ENCODE measurements at regions of chr11 and their contacts with region 1.

Region 1: DNA sequence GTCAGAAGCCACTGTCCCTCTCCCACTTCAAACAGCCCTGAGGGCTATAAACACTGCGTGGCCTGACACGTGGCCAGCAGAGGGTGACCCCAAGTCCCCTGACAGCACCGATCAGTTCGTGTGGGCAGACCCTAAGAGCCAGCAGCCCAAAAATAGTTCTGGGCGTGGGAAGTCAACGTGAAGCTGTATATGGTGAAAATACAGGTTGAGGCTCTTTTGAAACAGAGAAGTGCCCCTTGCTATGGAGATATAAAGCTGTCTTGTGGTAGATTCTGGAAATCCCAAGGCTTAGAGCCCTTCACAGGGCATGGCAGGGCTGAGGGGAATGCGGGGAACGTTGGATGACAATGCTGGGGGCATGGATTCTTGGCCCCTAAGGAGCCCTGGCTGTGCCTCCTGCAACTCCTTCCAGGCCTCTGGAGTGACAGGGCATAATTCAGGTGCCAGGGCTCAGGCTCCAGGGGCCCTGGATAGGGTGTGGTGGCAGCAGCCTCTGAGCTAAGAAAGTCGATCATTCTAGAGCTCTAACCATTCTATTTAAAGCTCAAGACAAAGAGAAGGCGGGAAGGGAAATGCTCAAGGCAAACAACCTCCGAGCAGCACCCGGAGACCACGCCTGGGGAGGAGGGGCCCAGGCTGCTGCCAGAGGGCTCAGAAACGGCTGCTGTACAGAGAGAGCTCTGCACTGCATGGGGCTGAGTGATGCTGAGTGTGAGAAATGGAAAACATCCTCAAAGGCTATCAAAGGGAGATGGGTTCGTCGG is 60.4 kb upstream of the CD5 start:
- DNase-seq: peak; percentile 54 to 92 (median 83)
- H3K4me3 ChIP-seq: peak overlapping the region; percentile 20
- H3K4me3 Mint-ChIP-seq: peak overlapping the region; percentile 74 to 90 (median 83)
- H3K27ac ChIP-seq: peak overlapping the region; percentile 83
- H3K27ac Mint-ChIP-seq: peak overlapping the region; percentile 95 to 100 (median 97)
- H3K4me1 ChIP-seq: peaks cover 50% of the 10 kb centered on the region
- H3K4me1 Mint-ChIP-seq: peaks cover 25 to 49% (median 37%) of the 10 kb centered on the region in 3 donors
- H3K27me3 ChIP-seq: no peaks in the 10 kb centered on the region
- H3K27me3 Mint-ChIP-seq: no peaks in the 10 kb centered on the region

Region 2: DNA sequence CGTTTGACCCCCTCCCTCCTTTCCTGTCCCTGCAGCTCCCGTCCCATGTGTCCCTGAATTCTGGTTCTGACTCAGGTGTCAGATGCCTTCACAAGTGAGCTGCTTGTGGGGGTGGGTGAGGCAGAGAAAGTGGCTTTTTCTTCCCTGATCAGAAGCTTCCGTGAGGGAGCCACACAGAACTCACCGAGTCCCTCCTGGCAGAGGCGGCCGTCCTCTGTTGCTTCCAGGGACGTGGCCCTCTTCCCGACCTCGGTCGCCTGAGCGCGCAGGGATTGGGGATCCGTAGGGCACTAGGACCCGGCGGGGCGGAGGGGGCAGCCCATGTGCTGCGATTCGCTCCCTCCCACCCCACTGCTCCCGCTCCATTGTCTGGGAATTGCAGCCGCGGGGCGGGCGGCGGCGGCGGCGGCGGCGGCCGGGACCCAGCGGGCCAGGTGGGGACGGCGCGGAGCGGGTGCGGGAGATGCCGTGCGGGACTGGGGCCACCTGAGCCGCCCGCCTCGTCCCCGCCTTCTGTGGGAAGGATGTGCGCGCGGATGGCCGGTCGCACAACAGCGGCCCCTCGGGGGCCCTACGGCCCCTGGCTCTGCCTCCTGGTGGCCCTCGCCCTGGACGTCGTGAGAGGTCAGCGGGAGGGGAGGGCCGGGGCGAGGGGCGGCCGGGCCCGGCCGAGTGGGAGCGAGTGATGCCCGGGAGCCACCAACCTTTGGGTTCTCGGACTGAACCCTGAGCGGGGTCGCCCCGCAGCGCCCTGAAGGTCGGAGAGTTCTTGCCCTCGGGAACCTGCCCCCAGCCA is 117.6 kb before region 1 on chr11 and contains the start of gene TMEM132A:
- CTCF ChIA-PET with region 1: no interaction called
- POLR2A ChIA-PET with region 1: no interaction called
- DNase-seq: no peak
- H3K4me3 ChIP-seq: no peak within 1 kb of the TSS
- H3K4me3 Mint-ChIP-seq: peak within 1 kb of the TSS; percentile 8 to 89 (median 70)
- H3K27ac ChIP-seq: no peak within 1 kb of the TSS
- H3K27ac Mint-ChIP-seq: peak within 1 kb of the TSS in 5 of 8 donors; percentile 18 to 56 (median 43)
- H3K4me1 ChIP-seq: peaks cover 13% of the 10 kb centered on the region
- H3K4me1 Mint-ChIP-seq: peaks cover 14 to 24% (median 17%) of the 10 kb centered on the region in 3 donors
- H3K27me3 ChIP-seq: peaks cover 20% of the 10 kb centered on the region
- H3K27me3 Mint-ChIP-seq: peaks cover 10 to 20% of the 10 kb centered on the region in 2 donors
- total RNA-seq, gene TMEM132A: 0.68 to 0.73 TPM

Region 3: GRCh38 chr11:60978546-60979380 is 63.2 kb before region 1 on chr11:
- CTCF ChIA-PET with region 1: interaction called, 3 read pairs
- POLR2A ChIA-PET with region 1: interaction called, 11 read pairs
- DNase-seq: peak in 4 of 5 donors; percentile 41 to 72 (median 54)
- H3K4me3 ChIP-seq: peak overlapping the region; percentile 17
- H3K4me3 Mint-ChIP-seq: peak overlapping the region; percentile 70 to 84 (median 81)
- H3K27ac ChIP-seq: peak overlapping the region; percentile 29
- H3K27ac Mint-ChIP-seq: peak overlapping the region; percentile 87 to 99 (median 96)
- H3K4me1 ChIP-seq: peaks cover 87% of the 10 kb centered on the region
- H3K4me1 Mint-ChIP-seq: peaks cover 82 to 95% (median 94%) of the 10 kb centered on the region in 3 donors
- H3K27me3 ChIP-seq: no peaks in the 10 kb centered on the region
- H3K27me3 Mint-ChIP-seq: no peaks in the 10 kb centered on the region

Region 4: GRCh38 chr11:61021661-61022212 is 20.2 kb before region 1 on chr11:
- CTCF ChIA-PET with region 1: interaction called, 27 read pairs
- POLR2A ChIA-PET with region 1: interaction called, 38 read pairs
- DNase-seq: peak; percentile 82 to 94 (median 89)
- H3K4me3 ChIP-seq: peak overlapping the region; percentile 60
- H3K4me3 Mint-ChIP-seq: peak overlapping the region; percentile 9 to 83 (median 77)
- H3K27ac ChIP-seq: peak overlapping the region; percentile 40
- H3K27ac Mint-ChIP-seq: peak overlapping the region; percentile 94 to 99 (median 98)
- H3K4me1 ChIP-seq: peaks cover 64% of the 10 kb centered on the region
- H3K4me1 Mint-ChIP-seq: peaks cover 61 to 87% (median 67%) of the 10 kb centered on the region in 3 donors
- H3K27me3 ChIP-seq: no peaks in the 10 kb centered on the region
- H3K27me3 Mint-ChIP-seq: peaks cover 0 to 1% of the 10 kb centered on the region in 2 donors

Region 5: DNA sequence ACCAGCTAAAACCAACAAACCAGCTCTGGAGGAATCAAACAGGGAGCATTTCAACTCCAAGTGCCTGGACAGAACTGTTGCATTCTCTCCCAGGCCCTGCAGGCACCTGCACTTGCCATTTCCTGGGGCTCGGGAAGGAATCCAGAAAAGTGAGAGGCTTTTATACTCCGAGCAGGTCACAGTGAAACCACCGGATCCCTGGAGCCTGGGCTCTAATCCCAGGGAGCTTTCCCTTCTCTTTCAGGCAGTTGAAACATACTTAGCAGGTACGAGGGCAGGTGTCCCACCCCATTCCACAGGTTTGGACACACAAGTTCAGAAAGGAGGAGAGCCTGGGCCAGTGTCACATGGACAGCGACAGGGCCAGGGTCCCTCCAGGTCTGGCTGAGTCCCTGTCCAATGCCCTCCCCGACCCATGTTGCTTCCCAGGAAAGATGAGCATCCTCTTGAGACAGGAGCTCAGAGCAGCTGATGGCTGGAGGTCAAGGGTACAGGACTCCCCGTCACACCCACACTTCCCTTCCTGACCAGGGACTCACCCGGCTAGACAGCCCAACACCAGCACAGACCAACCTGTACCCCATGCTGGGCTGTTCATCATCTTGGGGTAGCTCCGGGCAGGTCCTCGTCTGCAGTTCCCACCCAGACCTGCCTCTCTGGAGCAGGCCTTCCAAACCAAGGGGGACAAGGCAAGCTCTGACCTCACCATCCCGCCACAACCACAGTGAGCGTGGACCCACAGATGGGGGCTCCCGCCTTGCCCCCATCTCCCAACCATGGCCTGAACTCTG is 10.4 kb after region 1 on chr11:
- CTCF ChIA-PET with region 1: interaction called, 10 read pairs
- POLR2A ChIA-PET with region 1: interaction called, 6 read pairs
- DNase-seq: no peak
- H3K4me3 ChIP-seq: no peak overlapping the region
- H3K4me3 Mint-ChIP-seq: no peak overlapping the region
- H3K27ac ChIP-seq: no peak overlapping the region
- H3K27ac Mint-ChIP-seq: no peak overlapping the region
- H3K4me1 ChIP-seq: peaks cover 8% of the 10 kb centered on the region
- H3K4me1 Mint-ChIP-seq: peaks cover 1 to 43% (median 25%) of the 10 kb centered on the region in 3 donors
- H3K27me3 ChIP-seq: no peaks in the 10 kb centered on the region
- H3K27me3 Mint-ChIP-seq: no peaks in the 10 kb centered on the region

Region 6: GRCh38 chr11:61071208-61071681 is 29.3 kb after region 1 on chr11:
- CTCF ChIA-PET with region 1: interaction called, 15 read pairs
- POLR2A ChIA-PET with region 1: interaction called, 10 read pairs
- DNase-seq: peak; percentile 39 to 83 (median 70)
- H3K4me3 ChIP-seq: peak overlapping the region; percentile 36
- H3K4me3 Mint-ChIP-seq: peak overlapping the region; percentile 12 to 89 (median 77)
- H3K27ac ChIP-seq: peak overlapping the region; percentile 58
- H3K27ac Mint-ChIP-seq: peak overlapping the region; percentile 91 to 100 (median 95)
- H3K4me1 ChIP-seq: peaks cover 73% of the 10 kb centered on the region
- H3K4me1 Mint-ChIP-seq: peaks cover 44 to 85% (median 72%) of the 10 kb centered on the region in 3 donors
- H3K27me3 ChIP-seq: no peaks in the 10 kb centered on the region
- H3K27me3 Mint-ChIP-seq: no peaks in the 10 kb centered on the region

Region 7: GRCh38 chr11:61129639-61130523 is 87.9 kb after region 1 on chr11:
- CTCF ChIA-PET with region 1: interaction called, 5 read pairs
- POLR2A ChIA-PET with region 1: interaction called, 12 read pairs
- DNase-seq: peak; percentile 81 to 91 (median 86)
- H3K4me3 ChIP-seq: no peak overlapping the region
- H3K4me3 Mint-ChIP-seq: peak overlapping the region in 5 of 7 donors; percentile 9 to 70 (median 37)
- H3K27ac ChIP-seq: no peak overlapping the region
- H3K27ac Mint-ChIP-seq: peak overlapping the region; percentile 1 to 94 (median 62)
- H3K4me1 ChIP-seq: peaks cover 19% of the 10 kb centered on the region
- H3K4me1 Mint-ChIP-seq: peaks cover 5 to 20% (median 11%) of the 10 kb centered on the region in 3 donors
- H3K27me3 ChIP-seq: no peaks in the 10 kb centered on the region
- H3K27me3 Mint-ChIP-seq: no peaks in the 10 kb centered on the region

Region 8: DNA sequence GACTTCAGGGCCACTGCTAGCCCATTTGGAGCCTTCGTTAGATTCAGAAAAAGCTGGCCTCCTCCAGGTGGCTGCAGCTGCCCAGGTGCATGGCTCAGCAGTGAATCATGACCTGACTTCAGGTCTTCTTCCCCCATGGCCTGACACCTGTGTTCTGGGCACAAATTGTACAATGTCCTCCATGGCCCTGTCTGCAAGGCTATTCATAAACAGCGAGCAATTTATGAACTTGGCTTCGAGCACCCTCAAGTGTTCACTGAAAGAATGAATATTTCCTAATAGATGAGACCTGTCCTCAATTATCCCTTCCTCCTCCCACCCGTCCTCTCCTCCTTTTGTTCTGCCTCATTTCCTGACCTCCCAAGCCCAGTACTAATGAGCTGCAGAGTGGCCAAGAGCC is 131.5 kb after region 1 on chr11:
- CTCF ChIA-PET with region 1: no interaction called
- POLR2A ChIA-PET with region 1: no interaction called
- DNase-seq: no peak
- H3K4me3 ChIP-seq: no peak overlapping the region
- H3K4me3 Mint-ChIP-seq: no peak overlapping the region
- H3K27ac ChIP-seq: no peak overlapping the region
- H3K27ac Mint-ChIP-seq: peak overlapping the region in 1 of 8 donors; percentile 49
- H3K4me1 ChIP-seq: peaks cover 13% of the 10 kb centered on the region
- H3K4me1 Mint-ChIP-seq: peaks cover 11 to 15% (median 12%) of the 10 kb centered on the region in 3 donors
- H3K27me3 ChIP-seq: no peaks in the 10 kb centered on the region
- H3K27me3 Mint-ChIP-seq: peaks cover 7 to 9% of the 10 kb centered on the region in 2 donors

Region 9: DNA sequence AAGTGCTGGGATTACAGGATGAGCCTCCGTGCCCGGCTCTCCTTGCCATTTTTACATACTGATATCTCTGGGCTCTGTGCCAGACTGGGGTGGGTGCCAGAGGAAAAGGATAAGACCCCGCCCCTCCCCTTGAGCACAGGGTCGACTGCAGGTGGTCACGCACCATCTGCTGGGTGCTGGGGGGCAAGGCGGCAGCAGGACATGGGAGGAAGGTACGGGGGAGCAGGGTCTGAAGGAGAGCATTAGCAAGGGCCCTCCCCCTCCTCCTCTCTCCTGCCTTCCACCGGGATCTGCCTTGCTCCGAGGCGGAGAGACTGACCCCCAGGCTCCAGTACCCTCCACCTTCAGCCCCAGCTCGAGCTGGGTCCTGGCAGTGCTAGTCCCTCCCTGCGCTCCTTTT is 151.7 kb after region 1 on chr11:
- CTCF ChIA-PET with region 1: no interaction called
- POLR2A ChIA-PET with region 1: no interaction called
- DNase-seq: no peak
- H3K4me3 ChIP-seq: no peak overlapping the region
- H3K4me3 Mint-ChIP-seq: no peak overlapping the region
- H3K27ac ChIP-seq: no peak overlapping the region
- H3K27ac Mint-ChIP-seq: no peak overlapping the region
- H3K4me1 ChIP-seq: no peaks in the 10 kb centered on the region
- H3K4me1 Mint-ChIP-seq: no peaks in the 10 kb centered on the region
- H3K27me3 ChIP-seq: no peaks in the 10 kb centered on the region
- H3K27me3 Mint-ChIP-seq: peaks cover 10 to 34% of the 10 kb centered on the region in 2 donors

Measured in CD8-positive, alpha-beta memory T cell (primary cell).